ENCODE measurements at regions of chr2 and their contacts with region 1.

Region 1: GRCh38 chr2:42828487-42829425 is 36.4 kb upstream of the HAAO start:
- DNase-seq: peak; percentile 74
- H3K4me3 ChIP-seq: peak overlapping the region; percentile 1
- H3K27ac ChIP-seq: peak overlapping the region; percentile 53
- H3K4me1 ChIP-seq: peaks cover 28% of the 10 kb centered on the region
- H3K27me3 ChIP-seq: no peaks in the 10 kb centered on the region
- CTCF ChIP-seq: peak; percentile 98

Region 2: GRCh38 chr2:43131024-43131889 is 302.5 kb after region 1 on chr2:
- intact Hi-C with region 1: loop called (anchors 10 kb)
- DNase-seq: peak; percentile 63
- H3K4me3 ChIP-seq: no peak overlapping the region
- H3K27ac ChIP-seq: peak overlapping the region; percentile 65
- H3K4me1 ChIP-seq: peaks cover 60% of the 10 kb centered on the region
- H3K27me3 ChIP-seq: no peaks in the 10 kb centered on the region
- CTCF ChIP-seq: peak; percentile 61

Region 3: DNA sequence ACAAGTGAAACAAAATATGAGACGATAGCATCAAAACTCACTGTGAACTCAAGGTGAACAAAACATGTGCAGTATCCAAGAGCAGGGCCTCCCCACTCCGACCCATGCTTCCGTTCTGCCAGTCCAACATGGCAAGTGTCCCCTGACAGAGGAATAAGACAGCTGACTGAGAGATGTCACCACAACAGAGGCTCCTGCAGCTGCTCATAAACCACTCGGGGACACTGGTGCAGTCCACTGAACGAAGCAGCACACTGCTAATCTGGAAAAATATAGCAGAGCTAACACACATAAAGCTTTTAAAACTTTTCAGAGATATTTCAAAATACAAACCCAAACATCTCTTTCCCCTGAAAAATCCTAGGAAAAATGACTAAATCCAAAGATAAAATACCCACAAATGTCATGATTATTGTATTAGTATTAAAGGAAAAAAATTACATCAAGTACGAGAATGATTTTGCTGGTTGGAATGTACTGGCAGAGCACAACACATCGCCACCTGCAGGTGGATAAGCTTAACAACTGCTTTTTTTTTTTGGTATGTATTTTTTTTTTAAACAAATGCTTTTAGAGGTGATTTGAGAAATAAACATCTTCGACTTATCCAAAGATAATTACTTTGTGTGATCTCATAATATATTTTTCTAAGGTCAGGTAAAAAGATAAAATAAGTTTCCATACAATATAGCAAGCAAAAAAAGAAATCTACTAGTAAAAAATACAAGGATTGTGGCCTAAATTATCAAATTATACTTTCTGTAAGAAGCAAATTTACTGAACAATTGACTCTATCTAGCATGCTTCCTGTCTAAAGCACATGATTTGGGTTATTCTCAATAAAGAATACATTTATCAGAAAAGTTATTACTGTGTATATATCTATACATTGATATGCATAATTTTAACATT is 748.5 kb after region 1 on chr2:
- intact Hi-C with region 1: loop called (anchors 10 kb)
- DNase-seq: no peak
- H3K4me3 ChIP-seq: no peak overlapping the region
- H3K27ac ChIP-seq: peak overlapping the region; percentile 36
- H3K4me1 ChIP-seq: peaks cover 5% of the 10 kb centered on the region
- H3K27me3 ChIP-seq: no peaks in the 10 kb centered on the region
- CTCF ChIP-seq: peak; percentile 77